ENCODE measurements at regions of chr18 and their contacts with region 1.

Region 1: GRCh38 chr18:77650799-77651385 is 401.2 kb downstream of the GALR1 start:
- H3K4me3 Mint-ChIP-seq: no peak overlapping the region
- H3K27ac Mint-ChIP-seq: no peak overlapping the region
- H3K4me1 Mint-ChIP-seq: peaks cover 4% of the 10 kb centered on the region
- H3K27me3 Mint-ChIP-seq: peaks cover 3% of the 10 kb centered on the region

Region 2: DNA sequence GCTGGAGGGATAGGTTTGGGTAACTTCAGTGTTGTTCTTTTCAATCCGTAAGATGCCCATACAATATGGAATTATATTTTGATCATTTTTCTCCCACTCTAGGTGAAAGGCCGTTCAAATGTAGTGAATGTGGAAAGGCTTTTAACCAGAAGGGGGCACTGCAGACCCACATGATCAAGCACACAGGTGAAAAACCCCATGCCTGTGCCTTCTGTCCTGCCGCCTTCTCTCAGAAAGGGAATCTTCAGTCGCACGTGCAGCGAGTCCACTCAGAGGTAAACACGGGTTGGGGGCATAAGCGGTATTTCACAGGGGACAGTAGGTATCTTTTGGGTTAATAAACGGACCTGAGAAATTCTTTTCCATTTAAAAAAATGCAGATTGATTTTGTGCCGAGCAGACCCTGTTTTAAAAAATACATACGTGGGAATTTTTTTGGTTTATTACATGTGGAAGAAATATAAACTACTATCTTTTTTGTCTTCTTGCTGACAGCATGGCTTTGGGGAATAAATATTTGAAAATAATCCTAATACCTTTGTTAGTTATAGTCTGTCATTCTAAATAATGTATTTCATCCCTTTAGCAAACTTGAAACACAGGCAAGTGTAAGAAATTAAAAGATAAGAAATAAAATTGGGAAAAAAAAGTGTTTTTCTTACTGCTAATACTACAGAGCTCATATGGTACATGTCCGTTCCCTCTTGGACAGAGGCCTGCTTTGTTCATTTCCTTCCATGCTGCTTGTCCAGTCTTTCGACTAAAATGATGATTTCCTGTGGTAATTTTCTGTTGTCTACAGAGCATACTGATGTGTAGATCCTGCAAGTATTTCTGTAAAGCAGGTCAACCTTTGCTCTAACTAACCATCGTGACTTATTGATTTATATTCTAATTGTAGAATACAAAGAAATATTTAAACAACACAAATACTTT is 775.2 kb before region 1 on chr18:
- intact Hi-C with region 1: loop called (anchors 5 kb)
- H3K4me3 Mint-ChIP-seq: no peak overlapping the region
- H3K27ac Mint-ChIP-seq: no peak overlapping the region
- H3K4me1 Mint-ChIP-seq: no peaks in the 10 kb centered on the region
- H3K27me3 Mint-ChIP-seq: no peaks in the 10 kb centered on the region

Region 3: DNA sequence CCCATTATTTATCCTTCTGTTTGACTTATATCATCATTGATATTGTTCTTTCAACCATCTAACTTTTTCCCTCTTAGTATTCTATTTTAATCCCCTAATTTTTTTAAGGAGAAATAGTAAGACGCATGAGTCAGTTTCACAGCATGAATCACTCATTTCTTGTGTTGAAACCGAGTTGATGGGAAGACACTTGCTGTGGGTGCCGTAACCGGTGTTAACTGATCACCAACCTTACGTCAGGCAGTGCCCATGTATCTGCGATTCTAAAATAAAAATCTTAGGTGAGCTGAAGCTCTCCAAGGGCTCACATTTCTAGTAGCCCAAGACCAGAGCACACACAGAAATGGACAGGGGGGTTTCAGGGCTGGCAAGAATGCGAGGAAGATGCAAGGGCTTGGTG is 53.2 kb before region 1 on chr18:
- intact Hi-C with region 1: no loop called
- H3K4me3 Mint-ChIP-seq: no peak overlapping the region
- H3K27ac Mint-ChIP-seq: no peak overlapping the region
- H3K4me1 Mint-ChIP-seq: no peaks in the 10 kb centered on the region
- H3K27me3 Mint-ChIP-seq: no peaks in the 10 kb centered on the region